Mammary epithelial cell (primary cell): ENCODE measurements at regions of chr7 and their contacts with region 1.

Region 1: GRCh38 chr7:1537535-1538412 is 7.3 kb downstream of the MAFK start:
- DNase-seq: peak; percentile 48
- H3K4me3 ChIP-seq: peak overlapping the region; percentile 11 to 49 (median 47)
- H3K27ac ChIP-seq: peak overlapping the region; percentile 76
- H3K4me1 ChIP-seq: peaks cover 29% of the 10 kb centered on the region
- H3K27me3 ChIP-seq: no peaks in the 10 kb centered on the region
- CTCF ChIP-seq: no peak

Region 2: GRCh38 chr7:1459522-1459892 is 78.3 kb before region 1 on chr7:
- CTCF ChIA-PET with region 1: no interaction called
- dilution Hi-C with region 1: no loop called
- in situ Hi-C with region 1: no loop called
- intact Hi-C with region 1: no loop called
- DNase-seq: peak; percentile 98
- H3K4me3 ChIP-seq: peak overlapping the region; percentile 91 to 96 (median 95)
- H3K27ac ChIP-seq: no peak overlapping the region
- H3K4me1 ChIP-seq: peaks cover 64% of the 10 kb centered on the region
- H3K27me3 ChIP-seq: no peaks in the 10 kb centered on the region
- CTCF ChIP-seq: no peak

Region 3: GRCh38 chr7:1638215-1638661 is 100.5 kb after region 1 on chr7:
- CTCF ChIA-PET with region 1: no interaction called
- dilution Hi-C with region 1: loop called (anchors 5 kb)
- in situ Hi-C with region 1: no loop called
- intact Hi-C with region 1: no loop called
- DNase-seq: no peak
- H3K4me3 ChIP-seq: no peak overlapping the region
- H3K27ac ChIP-seq: no peak overlapping the region
- H3K4me1 ChIP-seq: no peaks in the 10 kb centered on the region
- H3K27me3 ChIP-seq: no peaks in the 10 kb centered on the region
- CTCF ChIP-seq: no peak